IMR-90 (cell line): ENCODE measurements at regions of chr13 and their contacts with region 1.

Region 1: DNA sequence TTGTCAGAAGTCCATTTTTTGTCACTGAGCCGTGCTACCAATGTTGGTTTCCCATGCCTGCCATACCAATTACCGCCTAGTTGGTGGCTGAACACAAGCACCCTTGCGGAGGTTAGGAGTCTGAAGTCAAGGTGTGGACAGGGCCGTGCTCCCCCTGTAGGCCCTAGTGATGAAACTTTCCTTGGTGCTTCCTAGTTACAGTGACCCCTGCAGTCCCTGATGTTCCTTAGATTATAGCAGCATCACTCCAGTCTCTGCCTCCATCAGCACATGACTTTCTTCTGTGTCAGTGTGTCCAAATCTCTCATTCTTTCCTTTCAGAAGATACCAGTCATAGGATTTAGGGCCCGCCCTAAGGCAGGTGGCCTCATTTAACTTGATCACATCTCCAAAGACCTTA is 99.0 kb downstream of the MYO16 start:
- DNase-seq: no peak
- ATAC-seq: no peak
- H3K4me3 ChIP-seq: no peak overlapping the region
- H3K27ac ChIP-seq: no peak overlapping the region
- H3K4me1 ChIP-seq: no peaks in the 10 kb centered on the region
- H3K27me3 ChIP-seq: no peaks in the 10 kb centered on the region
- CTCF ChIP-seq: no peak
- POLR2A ChIP-seq: no peak
- RAD21 ChIP-seq: no peak

Region 2: GRCh38 chr13:106844811-106845210 is 1883.6 kb before region 1 on chr13:
- CTCF ChIA-PET with region 1: no interaction called
- POLR2A ChIA-PET with region 1: interaction called, 18 read pairs
- dilution Hi-C with region 1: no loop called
- in situ Hi-C with region 1: no loop called
- intact Hi-C with region 1: no loop called
- DNase-seq: no peak
- ATAC-seq: no peak
- H3K4me3 ChIP-seq: no peak overlapping the region
- H3K27ac ChIP-seq: no peak overlapping the region
- H3K4me1 ChIP-seq: no peaks in the 10 kb centered on the region
- H3K27me3 ChIP-seq: no peaks in the 10 kb centered on the region
- CTCF ChIP-seq: no peak
- POLR2A ChIP-seq: no peak
- RAD21 ChIP-seq: no peak

Region 3: GRCh38 chr13:108850691-108851090 is 122.3 kb after region 1 on chr13:
- CTCF ChIA-PET with region 1: interaction called, 11 read pairs
- POLR2A ChIA-PET with region 1: no interaction called
- dilution Hi-C with region 1: no loop called
- in situ Hi-C with region 1: no loop called
- intact Hi-C with region 1: no loop called
- DNase-seq: no peak
- ATAC-seq: peak; percentile 42; the same call in 1 of the 2 replicates
- H3K4me3 ChIP-seq: no peak overlapping the region
- H3K27ac ChIP-seq: no peak overlapping the region
- H3K4me1 ChIP-seq: no peaks in the 10 kb centered on the region
- H3K27me3 ChIP-seq: no peaks in the 10 kb centered on the region
- CTCF ChIP-seq: no peak
- POLR2A ChIP-seq: no peak
- RAD21 ChIP-seq: no peak